ENCODE measurements at regions of chr1 and their contacts with region 1.

Region 1: DNA sequence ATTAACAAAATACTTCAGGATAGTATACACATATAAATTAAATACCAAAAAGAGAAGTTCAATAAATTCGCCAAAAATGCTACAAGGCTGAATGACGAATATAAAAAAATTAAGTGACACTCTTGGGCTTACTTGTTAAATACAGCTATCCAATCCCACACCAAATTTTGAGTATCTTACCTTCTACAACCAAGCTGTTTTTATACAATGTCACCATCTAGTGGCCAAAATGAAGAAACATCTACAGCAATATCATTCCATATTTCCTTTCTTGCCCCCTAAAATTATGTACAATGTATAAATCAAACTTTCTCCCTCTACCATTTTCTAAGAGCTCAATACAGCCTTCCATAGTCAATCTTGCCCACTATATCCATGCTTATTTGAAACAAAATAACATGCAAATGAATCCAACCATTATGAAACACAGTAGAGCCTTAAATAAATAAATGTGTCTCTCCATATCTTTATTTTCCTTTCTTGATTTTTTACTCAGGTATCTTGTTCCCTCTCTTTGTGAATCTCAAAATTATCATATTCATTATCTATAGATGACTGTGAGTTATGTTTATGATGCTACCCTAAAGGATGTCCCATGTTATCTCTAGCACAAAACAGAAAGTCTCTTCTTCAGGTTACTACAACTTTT is 86.3 kb downstream of the ACBD6 start:
- DNase-seq: peak in 1 of 2 experiments; percentile 3
- H3K4me3 ChIP-seq: no peak overlapping the region
- H3K4me3 Mint-ChIP-seq: no peak overlapping the region
- H3K27ac Mint-ChIP-seq: no peak overlapping the region
- H3K4me1 ChIP-seq: no peaks in the 10 kb centered on the region
- H3K4me1 Mint-ChIP-seq: no peaks in the 10 kb centered on the region
- H3K27me3 ChIP-seq: no peaks in the 10 kb centered on the region
- H3K27me3 Mint-ChIP-seq: no peaks in the 10 kb centered on the region
- CTCF ChIP-seq: peak; percentile 45 to 66

Region 2: GRCh38 chr1:180252638-180253536 is 163.2 kb before region 1 on chr1:
- CTCF ChIA-PET with region 1: no interaction called
- POLR2A ChIA-PET with region 1: no interaction called
- intact Hi-C with region 1: loop called (anchors 1 kb)
- DNase-seq: peak; percentile 78 to 80
- H3K4me3 ChIP-seq: no peak overlapping the region
- H3K4me3 Mint-ChIP-seq: no peak overlapping the region
- H3K27ac Mint-ChIP-seq: no peak overlapping the region
- H3K4me1 ChIP-seq: no peaks in the 10 kb centered on the region
- H3K4me1 Mint-ChIP-seq: no peaks in the 10 kb centered on the region
- H3K27me3 ChIP-seq: no peaks in the 10 kb centered on the region
- H3K27me3 Mint-ChIP-seq: no peaks in the 10 kb centered on the region
- CTCF ChIP-seq: peak; percentile 63 to 85

Region 3: GRCh38 chr1:180365039-180365438 is 51.1 kb before region 1 on chr1:
- CTCF ChIA-PET with region 1: no interaction called
- POLR2A ChIA-PET with region 1: no interaction called
- intact Hi-C with region 1: loop called (anchors 1 kb)
- DNase-seq: no peak
- H3K4me3 ChIP-seq: no peak overlapping the region
- H3K4me3 Mint-ChIP-seq: no peak overlapping the region
- H3K27ac Mint-ChIP-seq: no peak overlapping the region
- H3K4me1 ChIP-seq: no peaks in the 10 kb centered on the region
- H3K4me1 Mint-ChIP-seq: no peaks in the 10 kb centered on the region
- H3K27me3 ChIP-seq: no peaks in the 10 kb centered on the region
- H3K27me3 Mint-ChIP-seq: no peaks in the 10 kb centered on the region
- CTCF ChIP-seq: peak; percentile 43 to 52

Measured in Caco-2 (cell line).